Colonic mucosa (tissue), 4 donors: ENCODE measurements at regions of chr19 and their contacts with region 1.

Region 1: GRCh38 chr19:1324806-1325567 is 39.3 kb downstream of the EFNA2 start:
- DNase-seq: peak; percentile 61
- H3K4me3 ChIP-seq: peak overlapping the region; percentile 6
- H3K27ac ChIP-seq: no peak overlapping the region
- H3K4me1 ChIP-seq: peaks cover 5% of the 10 kb centered on the region
- H3K27me3 ChIP-seq: peaks cover 18% of the 10 kb centered on the region
- CTCF ChIP-seq: no peak

Region 2: GRCh38 chr19:1275260-1275975 is 49.6 kb before region 1 on chr19 and contains the start of gene FAM174C:
- intact Hi-C with region 1: no loop called
- DNase-seq: peak; percentile 96
- H3K4me3 ChIP-seq: peak within 1 kb of the TSS; percentile 67
- H3K27ac ChIP-seq: peak within 1 kb of the TSS; percentile 99
- H3K4me1 ChIP-seq: peaks cover 43% of the 10 kb centered on the region
- H3K27me3 ChIP-seq: no peaks in the 10 kb centered on the region
- CTCF ChIP-seq: no peak
- total RNA-seq, gene FAM174C: 41.8 to 114 TPM

Region 3: GRCh38 chr19:1285737-1286360 is 39.1 kb before region 1 on chr19 and contains the start of gene EFNA2:
- intact Hi-C with region 1: no loop called
- DNase-seq: no peak
- H3K4me3 ChIP-seq: peak within 1 kb of the TSS; percentile 53
- H3K27ac ChIP-seq: peak within 1 kb of the TSS; percentile 91
- H3K4me1 ChIP-seq: peaks cover 8% of the 10 kb centered on the region
- H3K27me3 ChIP-seq: peaks cover 17% of the 10 kb centered on the region
- CTCF ChIP-seq: no peak
- total RNA-seq, gene EFNA2: 72.8 to 86.1 TPM

Region 4: GRCh38 chr19:1360818-1361461 is 36.0 kb after region 1 on chr19:
- intact Hi-C with region 1: loop called (anchors 5 kb)
- DNase-seq: no peak
- H3K4me3 ChIP-seq: no peak overlapping the region
- H3K27ac ChIP-seq: peak overlapping the region; percentile 58
- H3K4me1 ChIP-seq: no peaks in the 10 kb centered on the region
- H3K27me3 ChIP-seq: no peaks in the 10 kb centered on the region
- CTCF ChIP-seq: no peak

Region 5: DNA sequence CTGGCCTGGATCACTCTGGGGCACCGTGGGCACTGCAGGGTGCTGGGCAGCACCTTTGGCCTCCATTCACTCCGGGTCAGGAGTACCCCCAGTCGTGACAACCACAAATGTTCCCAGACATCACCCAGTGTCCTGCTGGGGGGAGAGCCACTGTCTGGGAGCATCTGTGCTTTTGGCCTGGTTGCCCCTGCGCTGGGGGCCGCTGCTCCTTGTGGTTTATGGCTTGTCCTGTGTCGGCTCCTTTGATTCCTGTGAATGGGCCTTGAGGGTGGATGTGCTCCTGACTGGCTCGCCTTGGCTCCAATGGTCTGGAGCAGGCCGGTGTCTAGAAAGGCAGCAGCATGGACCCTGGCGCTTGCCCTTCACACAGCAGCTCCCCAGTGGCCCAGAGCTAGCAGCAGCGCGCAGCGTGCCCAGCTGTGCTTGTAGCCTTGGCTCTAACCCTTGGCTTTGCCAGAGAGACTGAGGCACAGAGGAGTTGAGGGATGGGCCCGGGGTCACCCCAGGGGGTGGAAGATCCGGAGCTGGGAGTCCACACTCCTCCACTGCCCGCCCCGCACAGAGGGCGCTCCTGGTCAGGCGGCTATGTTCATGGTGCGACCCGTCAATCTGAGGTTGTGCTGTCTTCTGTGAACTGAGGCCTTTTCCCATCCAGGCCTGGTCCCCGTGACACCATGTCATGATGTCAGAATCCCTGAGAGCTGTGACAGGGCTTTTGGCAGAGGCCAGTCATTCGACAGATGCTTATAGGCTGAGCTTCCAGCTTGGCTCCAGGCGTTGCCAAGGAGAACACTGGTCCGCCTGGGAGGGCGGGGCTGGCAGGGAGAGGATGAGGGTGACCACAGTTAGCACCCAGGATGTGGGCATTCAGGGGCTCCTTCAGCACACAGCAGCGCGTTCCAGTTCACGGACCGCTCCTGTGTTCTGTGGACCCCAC is 86.5 kb after region 1 on chr19:
- intact Hi-C with region 1: no loop called
- DNase-seq: no peak
- H3K4me3 ChIP-seq: no peak overlapping the region
- H3K27ac ChIP-seq: no peak overlapping the region
- H3K4me1 ChIP-seq: peaks cover 47% of the 10 kb centered on the region
- H3K27me3 ChIP-seq: no peaks in the 10 kb centered on the region
- CTCF ChIP-seq: no peak

Region 6: GRCh38 chr19:1478934-1479707 is 154.1 kb after region 1 on chr19 and contains the start of gene C19orf25:
- intact Hi-C with region 1: no loop called
- DNase-seq: peak; percentile 97
- H3K4me3 ChIP-seq: peak within 1 kb of the TSS; percentile 98
- H3K27ac ChIP-seq: peak within 1 kb of the TSS; percentile 83
- H3K4me1 ChIP-seq: peaks cover 6% of the 10 kb centered on the region
- H3K27me3 ChIP-seq: no peaks in the 10 kb centered on the region
- CTCF ChIP-seq: no peak
- total RNA-seq, gene C19orf25: 27.3 to 46.9 TPM